Activated CD8-positive, alpha-beta T cell treated with anti-CD3 and anti-CD28 coated beads for 36 hours (primary cell): ENCODE measurements at regions of chr1 and their contacts with region 1.

Region 1: DNA sequence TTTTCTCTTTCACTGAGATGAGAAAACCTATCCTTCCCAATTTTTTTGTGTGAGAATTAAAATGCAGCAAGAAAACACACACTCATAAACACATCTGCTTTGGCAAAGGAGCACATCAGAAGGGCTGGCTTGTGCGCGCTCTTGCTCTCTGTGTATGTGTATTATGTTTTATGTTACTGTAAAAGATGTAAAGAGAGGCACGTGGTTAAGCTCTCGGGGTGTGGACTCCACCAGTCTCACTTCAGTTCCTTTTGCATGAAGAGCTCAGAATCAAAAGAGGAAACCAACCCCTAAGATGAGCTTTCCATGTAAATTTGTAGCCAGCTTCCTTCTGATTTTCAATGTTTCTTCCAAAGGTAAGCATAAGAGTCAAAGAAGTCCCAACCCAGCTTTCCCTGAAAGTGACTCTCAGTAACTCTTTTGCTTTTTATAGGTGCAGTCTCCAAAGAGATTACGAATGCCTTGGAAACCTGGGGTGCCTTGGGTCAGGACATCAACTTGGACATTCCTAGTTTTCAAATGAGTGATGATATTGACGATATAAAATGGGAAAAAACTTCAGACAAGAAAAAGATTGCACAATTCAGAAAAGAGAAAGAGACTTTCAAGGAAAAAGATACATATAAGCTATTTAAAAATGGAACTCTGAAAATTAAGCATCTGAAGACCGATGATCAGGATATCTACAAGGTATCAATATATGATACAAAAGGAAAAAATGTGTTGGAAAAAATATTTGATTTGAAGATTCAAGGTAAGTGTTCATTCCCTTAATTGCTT is at the start of gene CD2:
- DNase-seq: peak; percentile 81
- ATAC-seq: peak; percentile 78
- H3K4me3 Mint-ChIP-seq: peak within 1 kb of the TSS; percentile 98
- H3K27ac Mint-ChIP-seq: peak within 1 kb of the TSS; percentile 99
- H3K4me1 Mint-ChIP-seq: peaks cover 23% of the 10 kb centered on the region
- H3K27me3 Mint-ChIP-seq: no peaks in the 10 kb centered on the region
- CTCF ChIP-seq: no peak
- total RNA-seq, gene CD2: 217 to 220 TPM

Region 2: GRCh38 chr1:116372587-116373444 is 381.6 kb before region 1 on chr1 and contains the start of gene ATP1A1:
- CTCF ChIA-PET with region 1: no interaction called
- POLR2A ChIA-PET with region 1: no interaction called
- intact Hi-C with region 1: loop called (anchors 10 kb)
- DNase-seq: peak; percentile 99
- ATAC-seq: peak; percentile 66
- H3K4me3 Mint-ChIP-seq: peak within 1 kb of the TSS; percentile 97
- H3K27ac Mint-ChIP-seq: peak within 1 kb of the TSS; percentile 94
- H3K4me1 Mint-ChIP-seq: peaks cover 33% of the 10 kb centered on the region
- H3K27me3 Mint-ChIP-seq: peaks cover 2% of the 10 kb centered on the region
- CTCF ChIP-seq: no peak
- total RNA-seq, gene ATP1A1: 201 to 202 TPM

Region 3: DNA sequence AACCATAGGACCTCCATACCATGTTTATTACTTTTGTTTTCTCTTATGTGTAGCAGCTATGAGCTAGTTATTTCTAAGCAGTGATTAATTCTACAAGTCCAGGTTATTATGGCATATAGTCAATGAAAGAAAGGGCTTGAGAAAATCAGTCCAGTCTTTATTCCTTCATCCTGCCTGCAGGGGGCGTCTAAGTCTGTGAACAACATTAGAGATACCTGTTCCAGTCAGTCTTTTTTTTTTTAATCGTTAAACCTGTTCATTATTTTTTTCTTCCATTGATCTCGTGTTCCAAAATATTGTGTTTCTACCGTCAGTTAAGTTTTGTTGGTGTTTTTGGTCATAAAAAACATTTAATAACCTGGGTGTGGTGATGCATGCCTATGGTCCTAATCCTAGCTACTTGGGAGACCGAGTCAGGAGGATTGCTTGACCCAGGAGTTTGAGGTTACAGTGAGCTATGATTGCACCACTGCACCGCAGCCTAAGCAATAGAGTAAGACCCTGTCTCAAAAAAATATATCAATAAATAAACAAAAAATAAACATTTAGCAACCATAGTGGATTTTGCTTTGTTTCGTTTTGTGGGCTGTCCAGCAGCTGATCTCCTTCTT is 29.5 kb before region 1 on chr1:
- CTCF ChIA-PET with region 1: interaction called, 11 read pairs
- POLR2A ChIA-PET with region 1: no interaction called
- intact Hi-C with region 1: no loop called
- DNase-seq: peak; percentile 92
- ATAC-seq: peak; percentile 84
- H3K4me3 Mint-ChIP-seq: no peak overlapping the region
- H3K27ac Mint-ChIP-seq: peak overlapping the region; percentile 28
- H3K4me1 Mint-ChIP-seq: peaks cover 34% of the 10 kb centered on the region
- H3K27me3 Mint-ChIP-seq: no peaks in the 10 kb centered on the region
- CTCF ChIP-seq: peak; percentile 90

Region 4: GRCh38 chr1:116769561-116769977 is 15.2 kb after region 1 on chr1:
- CTCF ChIA-PET with region 1: interaction called, 49 read pairs
- POLR2A ChIA-PET with region 1: interaction called, 850 read pairs
- intact Hi-C with region 1: no loop called
- DNase-seq: peak; percentile 89
- ATAC-seq: peak; percentile 56
- H3K4me3 Mint-ChIP-seq: peak overlapping the region; percentile 98
- H3K27ac Mint-ChIP-seq: peak overlapping the region; percentile 99
- H3K4me1 Mint-ChIP-seq: peaks cover 92% of the 10 kb centered on the region
- H3K27me3 Mint-ChIP-seq: no peaks in the 10 kb centered on the region
- CTCF ChIP-seq: no peak

Region 5: DNA sequence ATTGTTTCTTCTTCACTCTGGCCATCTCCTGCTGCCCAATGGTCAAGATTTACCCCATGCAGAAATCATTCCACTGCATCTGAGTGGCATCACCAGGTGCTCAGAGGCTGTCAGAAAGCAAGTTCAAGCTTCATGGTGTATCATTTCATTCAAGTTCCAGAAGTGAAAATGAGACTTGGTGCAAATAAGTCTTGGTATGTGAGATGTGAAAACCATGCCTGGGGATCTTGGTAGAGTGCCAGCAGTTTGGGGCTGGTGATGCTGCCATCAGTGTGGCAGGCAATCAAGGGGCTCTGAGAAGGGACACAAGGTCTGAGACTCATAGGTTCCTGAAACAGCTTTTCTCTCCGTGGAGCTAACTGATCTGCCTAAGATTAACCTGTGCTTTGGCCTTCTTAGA is 51.9 kb after region 1 on chr1:
- CTCF ChIA-PET with region 1: interaction called, 4 read pairs
- POLR2A ChIA-PET with region 1: interaction called, 520 read pairs
- intact Hi-C with region 1: no loop called
- DNase-seq: peak; percentile 93
- ATAC-seq: peak; percentile 68
- H3K4me3 Mint-ChIP-seq: peak overlapping the region; percentile 94
- H3K27ac Mint-ChIP-seq: peak overlapping the region; percentile 91
- H3K4me1 Mint-ChIP-seq: peaks cover 78% of the 10 kb centered on the region
- H3K27me3 Mint-ChIP-seq: no peaks in the 10 kb centered on the region
- CTCF ChIP-seq: no peak

Region 6: DNA sequence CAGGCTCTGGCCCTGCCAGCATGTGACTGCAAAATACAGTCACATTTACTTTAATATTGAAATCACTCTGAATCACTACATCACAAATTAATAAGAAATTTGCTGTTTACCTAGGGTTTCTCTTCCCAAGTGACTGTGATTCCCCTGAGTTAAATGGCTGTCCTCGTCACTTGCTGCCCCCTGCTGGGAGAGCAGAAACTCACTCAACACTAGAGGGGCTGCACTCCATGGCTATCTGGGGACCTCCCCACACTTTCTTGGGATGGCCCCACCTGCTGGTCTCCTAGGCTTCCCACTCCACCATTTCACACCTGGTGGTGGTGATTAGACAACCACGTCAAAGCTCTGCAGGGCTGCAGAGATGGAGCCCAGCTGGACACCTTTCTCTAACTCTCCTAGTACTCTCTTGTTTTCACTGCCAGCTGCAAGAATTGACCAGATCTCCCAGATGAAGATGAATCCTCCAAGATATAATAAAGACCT is 63.2 kb after region 1 on chr1:
- CTCF ChIA-PET with region 1: interaction called, 14 read pairs
- POLR2A ChIA-PET with region 1: interaction called, 30 read pairs
- intact Hi-C with region 1: no loop called
- DNase-seq: peak; percentile 80
- ATAC-seq: peak; percentile 67
- H3K4me3 Mint-ChIP-seq: peak overlapping the region; percentile 52
- H3K27ac Mint-ChIP-seq: peak overlapping the region; percentile 96
- H3K4me1 Mint-ChIP-seq: peaks cover 52% of the 10 kb centered on the region
- H3K27me3 Mint-ChIP-seq: no peaks in the 10 kb centered on the region
- CTCF ChIP-seq: peak; percentile 95

Region 7: GRCh38 chr1:116826818-116827606 is 72.6 kb after region 1 on chr1:
- CTCF ChIA-PET with region 1: interaction called, 6 read pairs
- POLR2A ChIA-PET with region 1: interaction called, 21 read pairs
- intact Hi-C with region 1: no loop called
- DNase-seq: peak; percentile 90
- ATAC-seq: peak; percentile 91
- H3K4me3 Mint-ChIP-seq: peak overlapping the region; percentile 76
- H3K27ac Mint-ChIP-seq: peak overlapping the region; percentile 97
- H3K4me1 Mint-ChIP-seq: peaks cover 55% of the 10 kb centered on the region
- H3K27me3 Mint-ChIP-seq: no peaks in the 10 kb centered on the region
- CTCF ChIP-seq: no peak

Region 8: GRCh38 chr1:117077267-117077666 is 322.9 kb after region 1 on chr1:
- CTCF ChIA-PET with region 1: no interaction called
- POLR2A ChIA-PET with region 1: no interaction called
- intact Hi-C with region 1: no loop called
- DNase-seq: peak; percentile 70
- ATAC-seq: peak; percentile 98
- H3K4me3 Mint-ChIP-seq: no peak overlapping the region
- H3K27ac Mint-ChIP-seq: peak overlapping the region; percentile 76
- H3K4me1 Mint-ChIP-seq: peaks cover 38% of the 10 kb centered on the region
- H3K27me3 Mint-ChIP-seq: no peaks in the 10 kb centered on the region
- CTCF ChIP-seq: no peak